PC-3 (cell line): ENCODE measurements at regions of chr18 and their contacts with region 1.

Region 1: GRCh38 chr18:41266616-41267015 is 688.4 kb upstream of the PIK3C3 start:
- DNase-seq: peak; percentile 18
- ATAC-seq: peak; percentile 56; the same call in 1 of the 2 replicates
- H3K4me3 ChIP-seq: no peak overlapping the region
- H3K27ac ChIP-seq: no peak overlapping the region
- H3K4me1 ChIP-seq: no peaks in the 10 kb centered on the region
- H3K27me3 ChIP-seq: no peaks in the 10 kb centered on the region
- CTCF ChIP-seq: no peak

Region 2: GRCh38 chr18:41146301-41146700 is 120.3 kb before region 1 on chr18:
- CTCF ChIA-PET with region 1: no interaction called
- POLR2A ChIA-PET with region 1: interaction called, 15 read pairs
- intact Hi-C with region 1: no loop called
- DNase-seq: no peak
- ATAC-seq: no peak
- H3K4me3 ChIP-seq: no peak overlapping the region
- H3K27ac ChIP-seq: no peak overlapping the region
- H3K4me1 ChIP-seq: no peaks in the 10 kb centered on the region
- H3K27me3 ChIP-seq: no peaks in the 10 kb centered on the region
- CTCF ChIP-seq: no peak

Region 3: GRCh38 chr18:41457765-41458326 is 191.2 kb after region 1 on chr18:
- CTCF ChIA-PET with region 1: no interaction called
- POLR2A ChIA-PET with region 1: no interaction called
- intact Hi-C with region 1: no loop called
- DNase-seq: no peak
- ATAC-seq: no peak
- H3K4me3 ChIP-seq: no peak overlapping the region
- H3K27ac ChIP-seq: no peak overlapping the region
- H3K4me1 ChIP-seq: peaks cover 26% of the 10 kb centered on the region
- H3K27me3 ChIP-seq: no peaks in the 10 kb centered on the region
- CTCF ChIP-seq: no peak

Region 4: GRCh38 chr18:41875094-41875780 is 608.6 kb after region 1 on chr18:
- CTCF ChIA-PET with region 1: no interaction called
- POLR2A ChIA-PET with region 1: no interaction called
- intact Hi-C with region 1: no loop called
- DNase-seq: peak; percentile 54
- ATAC-seq: peak; percentile 56
- H3K4me3 ChIP-seq: no peak overlapping the region
- H3K27ac ChIP-seq: peak overlapping the region; percentile 55
- H3K4me1 ChIP-seq: peaks cover 44% of the 10 kb centered on the region
- H3K27me3 ChIP-seq: no peaks in the 10 kb centered on the region
- CTCF ChIP-seq: no peak